AG04450 (cell line): ENCODE measurements at regions of chr11 and their contacts with region 1.

Region 1: GRCh38 chr11:131867457-131868257 is 497.2 kb downstream of the NTM start:
- DNase-seq: peak; percentile 81
- H3K4me3 ChIP-seq: no peak overlapping the region
- H3K27ac ChIP-seq: no peak overlapping the region
- H3K27me3 ChIP-seq: no peaks in the 10 kb centered on the region
- CTCF ChIP-seq: peak; percentile 97

Region 2: GRCh38 chr11:131748151-131749050 is 119.3 kb before region 1 on chr11:
- CTCF ChIA-PET with region 1: interaction called, 35 read pairs
- POLR2A ChIA-PET with region 1: no interaction called
- DNase-seq: no peak
- H3K4me3 ChIP-seq: no peak overlapping the region
- H3K27ac ChIP-seq: peak overlapping the region; percentile 77
- H3K27me3 ChIP-seq: no peaks in the 10 kb centered on the region
- CTCF ChIP-seq: peak; percentile 90

Region 3: DNA sequence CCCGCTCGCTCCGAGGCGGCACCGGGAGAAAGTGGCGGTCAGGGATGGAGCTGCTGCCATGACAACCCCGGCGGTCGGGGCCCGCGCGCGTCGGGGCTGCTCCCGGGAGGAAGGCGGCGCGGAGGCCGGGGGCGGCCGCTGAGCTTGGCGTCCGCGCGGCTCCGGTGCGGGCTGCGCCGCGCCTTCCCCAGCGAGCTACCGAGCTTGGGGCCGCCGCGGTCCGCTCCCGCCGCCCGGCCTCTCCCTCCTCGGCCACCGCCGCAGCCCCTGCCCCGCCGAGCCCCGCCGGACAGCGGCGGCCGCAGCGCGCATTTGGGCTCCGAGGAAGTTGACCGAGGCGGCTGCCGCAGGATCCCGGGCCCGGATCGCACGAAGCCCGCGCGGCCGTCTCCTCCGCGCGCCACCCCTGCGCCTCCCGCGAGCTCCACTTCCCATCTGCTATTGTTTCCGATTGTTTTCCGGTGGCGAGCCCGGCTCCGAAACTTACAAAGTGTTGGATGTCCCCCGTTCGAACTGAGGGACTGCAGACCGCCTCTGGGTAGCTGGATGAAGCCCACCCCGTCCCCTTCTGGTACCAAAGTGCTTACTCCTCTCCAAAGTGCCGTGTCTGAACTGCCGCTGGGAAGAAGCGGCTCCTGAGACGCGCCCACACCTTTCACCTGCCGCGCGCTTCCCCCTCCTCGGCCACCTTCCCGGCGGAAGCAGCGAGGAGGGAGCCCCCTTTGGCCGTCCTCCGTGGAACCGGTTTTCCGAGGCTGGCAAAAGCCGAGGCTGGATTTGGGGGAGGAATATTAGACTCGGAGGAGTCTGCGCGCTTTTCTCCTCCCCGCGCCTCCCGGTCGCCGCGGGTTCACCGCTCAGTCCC is 43.1 kb after region 1 on chr11:
- CTCF ChIA-PET with region 1: interaction called, 88 read pairs
- POLR2A ChIA-PET with region 1: no interaction called
- DNase-seq: no peak
- H3K4me3 ChIP-seq: peak overlapping the region; percentile 88
- H3K27ac ChIP-seq: peak overlapping the region; percentile 25
- H3K27me3 ChIP-seq: no peaks in the 10 kb centered on the region
- CTCF ChIP-seq: no peak; the same call in 1 of the 2 replicates

Region 4: GRCh38 chr11:131944736-131945135 is 77.1 kb after region 1 on chr11:
- CTCF ChIA-PET with region 1: no interaction called
- POLR2A ChIA-PET with region 1: no interaction called
- DNase-seq: peak; percentile 30
- H3K4me3 ChIP-seq: no peak overlapping the region
- H3K27ac ChIP-seq: peak overlapping the region; percentile 57
- H3K27me3 ChIP-seq: no peaks in the 10 kb centered on the region
- CTCF ChIP-seq: no peak

Region 5: DNA sequence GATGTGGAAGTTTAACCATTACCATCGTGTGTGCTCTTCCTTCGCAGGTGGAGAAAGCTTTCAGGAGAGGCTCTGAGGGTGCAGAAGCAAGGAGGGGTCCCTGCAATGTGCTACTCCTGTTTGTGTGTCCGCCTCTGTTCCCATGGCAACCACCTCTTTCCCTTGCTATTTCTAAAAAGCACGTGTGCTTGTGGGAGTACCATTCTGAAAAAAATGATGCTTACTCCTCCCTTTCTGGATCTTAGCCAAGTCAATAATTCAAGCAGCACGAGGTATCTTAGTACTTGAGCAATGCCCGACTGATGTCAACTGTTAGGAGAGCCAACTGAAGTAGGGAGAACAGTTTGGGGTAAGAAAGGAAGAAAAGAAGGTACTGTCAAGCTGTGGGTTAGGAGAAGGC is 131.4 kb after region 1 on chr11:
- CTCF ChIA-PET with region 1: no interaction called
- POLR2A ChIA-PET with region 1: no interaction called
- DNase-seq: no peak
- H3K4me3 ChIP-seq: no peak overlapping the region
- H3K27ac ChIP-seq: no peak overlapping the region
- H3K27me3 ChIP-seq: no peaks in the 10 kb centered on the region
- CTCF ChIP-seq: no peak

Region 6: DNA sequence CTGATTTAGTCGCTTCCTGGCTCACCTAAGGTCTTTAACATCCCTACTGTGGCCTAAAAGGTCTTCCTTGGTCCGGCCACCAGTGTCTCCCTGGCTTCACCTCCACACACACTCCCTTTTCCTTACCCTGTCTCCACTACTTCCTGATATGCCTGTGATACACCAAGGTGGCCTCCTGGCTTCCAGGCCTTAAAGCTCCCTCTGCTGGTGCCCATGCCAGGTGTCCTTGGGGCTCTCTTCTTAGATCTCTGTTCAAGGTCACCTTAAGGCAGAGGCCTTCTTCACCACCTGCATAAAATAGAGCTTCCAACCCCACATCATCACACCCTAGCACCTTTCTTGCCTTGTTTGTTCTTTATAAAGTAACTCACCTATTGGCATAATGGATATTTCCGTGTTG is 290.4 kb after region 1 on chr11:
- CTCF ChIA-PET with region 1: interaction called, 25 read pairs
- POLR2A ChIA-PET with region 1: no interaction called
- DNase-seq: no peak
- H3K4me3 ChIP-seq: no peak overlapping the region
- H3K27ac ChIP-seq: no peak overlapping the region
- H3K27me3 ChIP-seq: no peaks in the 10 kb centered on the region
- CTCF ChIP-seq: peak; percentile 53

Region 7: GRCh38 chr11:132402071-132402684 is 534.5 kb after region 1 on chr11:
- CTCF ChIA-PET with region 1: interaction called, 19 read pairs
- POLR2A ChIA-PET with region 1: no interaction called
- DNase-seq: peak; percentile 29
- H3K4me3 ChIP-seq: no peak overlapping the region
- H3K27ac ChIP-seq: no peak overlapping the region
- H3K27me3 ChIP-seq: peaks cover 15% of the 10 kb centered on the region
- CTCF ChIP-seq: peak; percentile 68